OCI-LY7 (cell line): ENCODE measurements at regions of chr3 and their contacts with region 1.

Region 1: GRCh38 chr3:155701882-155702465 is 42.9 kb downstream of the PLCH1 start:
- DNase-seq: peak; percentile 76
- H3K4me3 ChIP-seq: no peak overlapping the region
- H3K27ac ChIP-seq: no peak overlapping the region
- H3K4me1 ChIP-seq: no peaks in the 10 kb centered on the region
- CTCF ChIP-seq: peak; percentile 90

Region 2: GRCh38 chr3:154758109-154758868 is 943.7 kb before region 1 on chr3:
- CTCF ChIA-PET with region 1: no interaction called
- POLR2A ChIA-PET with region 1: no interaction called
- intact Hi-C with region 1: loop called (anchors 10 kb)
- DNase-seq: peak; percentile 65
- H3K4me3 ChIP-seq: no peak overlapping the region
- H3K27ac ChIP-seq: no peak overlapping the region
- H3K4me1 ChIP-seq: no peaks in the 10 kb centered on the region
- CTCF ChIP-seq: peak; percentile 89

Region 3: DNA sequence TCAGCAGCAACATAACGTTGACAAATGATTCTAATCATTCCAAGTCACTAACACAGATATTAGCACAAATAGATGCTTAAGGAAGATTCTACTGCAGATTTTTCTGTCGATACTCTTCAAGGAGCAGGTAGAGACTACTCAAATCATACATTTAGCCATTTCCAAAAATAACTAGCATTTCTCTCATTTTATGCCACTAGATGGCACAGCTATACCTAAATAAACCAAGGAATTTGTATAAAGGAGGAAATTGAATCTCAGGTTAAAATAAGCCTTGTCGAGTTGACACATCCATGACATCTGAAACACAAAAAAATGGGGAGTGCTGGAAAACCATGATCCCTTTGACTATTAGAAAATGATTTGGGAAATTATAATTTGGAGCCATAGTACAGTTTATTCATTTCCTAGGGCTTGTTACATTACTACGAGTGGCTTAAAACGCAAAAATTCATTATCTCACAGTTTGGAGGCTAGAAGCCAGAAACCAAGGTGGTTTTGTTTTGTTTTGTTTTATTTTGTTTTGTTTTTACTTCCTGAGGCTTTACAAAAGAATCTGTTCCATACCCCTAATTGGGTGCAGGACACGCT is 349.0 kb before region 1 on chr3:
- CTCF ChIA-PET with region 1: interaction called, 3 read pairs
- POLR2A ChIA-PET with region 1: no interaction called
- intact Hi-C with region 1: loop called (anchors 1 kb)
- DNase-seq: peak; percentile 67
- H3K4me3 ChIP-seq: no peak overlapping the region
- H3K27ac ChIP-seq: no peak overlapping the region
- H3K4me1 ChIP-seq: no peaks in the 10 kb centered on the region
- CTCF ChIP-seq: peak; percentile 85

Region 4: GRCh38 chr3:155382396-155383042 is 319.5 kb before region 1 on chr3:
- CTCF ChIA-PET with region 1: no interaction called
- POLR2A ChIA-PET with region 1: no interaction called
- intact Hi-C with region 1: loop called (anchors 2 kb)
- DNase-seq: peak; percentile 53
- H3K4me3 ChIP-seq: no peak overlapping the region
- H3K27ac ChIP-seq: no peak overlapping the region
- H3K4me1 ChIP-seq: no peaks in the 10 kb centered on the region
- CTCF ChIP-seq: peak; percentile 86